Ascending aorta (tissue), 2 donors: ENCODE measurements at regions of chr16 and their contacts with region 1.

Region 1: GRCh38 chr16:21088646-21089538 is 61.8 kb downstream of the DNAH3 start:
- DNase-seq: no peak
- H3K4me3 ChIP-seq: no peak overlapping the region
- H3K27ac ChIP-seq: peak overlapping the region in 1 of 2 donors; percentile 3
- H3K4me1 ChIP-seq: peaks cover 0 to 3% of the 10 kb centered on the region in 2 donors
- H3K27me3 ChIP-seq: no peaks in the 10 kb centered on the region
- CTCF ChIP-seq: no peak

Region 2: GRCh38 chr16:21116148-21116693 is 27.3 kb after region 1 on chr16:
- intact Hi-C with region 1: loop called (anchors 2 kb)
- DNase-seq: no peak
- H3K4me3 ChIP-seq: no peak overlapping the region
- H3K27ac ChIP-seq: no peak overlapping the region
- H3K4me1 ChIP-seq: no peaks in the 10 kb centered on the region
- H3K27me3 ChIP-seq: no peaks in the 10 kb centered on the region
- CTCF ChIP-seq: no peak